ENCODE measurements at regions of chr6 and their contacts with region 1.

Region 1: GRCh38 chr6:114407426-114408035 is 64.7 kb upstream of the HS3ST5 start:
- DNase-seq: no peak
- H3K4me3 ChIP-seq: no peak overlapping the region
- H3K27ac ChIP-seq: no peak overlapping the region
- H3K4me1 ChIP-seq: no peaks in the 10 kb centered on the region
- H3K27me3 ChIP-seq: no peaks in the 10 kb centered on the region
- CTCF ChIP-seq: no peak

Region 2: GRCh38 chr6:113750151-113750855 is 657.2 kb before region 1 on chr6:
- CTCF ChIA-PET with region 1: no interaction called
- POLR2A ChIA-PET with region 1: no interaction called
- intact Hi-C with region 1: no loop called
- DNase-seq: no peak
- H3K4me3 ChIP-seq: no peak overlapping the region
- H3K27ac ChIP-seq: no peak overlapping the region
- H3K4me1 ChIP-seq: no peaks in the 10 kb centered on the region
- H3K27me3 ChIP-seq: no peaks in the 10 kb centered on the region
- CTCF ChIP-seq: no peak

Region 3: GRCh38 chr6:114290864-114291263 is 116.7 kb before region 1 on chr6:
- CTCF ChIA-PET with region 1: no interaction called
- POLR2A ChIA-PET with region 1: interaction called, 13 read pairs
- intact Hi-C with region 1: no loop called
- DNase-seq: no peak
- H3K4me3 ChIP-seq: no peak overlapping the region
- H3K27ac ChIP-seq: no peak overlapping the region
- H3K4me1 ChIP-seq: no peaks in the 10 kb centered on the region
- H3K27me3 ChIP-seq: no peaks in the 10 kb centered on the region
- CTCF ChIP-seq: no peak

Measured in A673 (cell line).